ENCODE measurements at regions of chr7 and their contacts with region 1.

Region 1: DNA sequence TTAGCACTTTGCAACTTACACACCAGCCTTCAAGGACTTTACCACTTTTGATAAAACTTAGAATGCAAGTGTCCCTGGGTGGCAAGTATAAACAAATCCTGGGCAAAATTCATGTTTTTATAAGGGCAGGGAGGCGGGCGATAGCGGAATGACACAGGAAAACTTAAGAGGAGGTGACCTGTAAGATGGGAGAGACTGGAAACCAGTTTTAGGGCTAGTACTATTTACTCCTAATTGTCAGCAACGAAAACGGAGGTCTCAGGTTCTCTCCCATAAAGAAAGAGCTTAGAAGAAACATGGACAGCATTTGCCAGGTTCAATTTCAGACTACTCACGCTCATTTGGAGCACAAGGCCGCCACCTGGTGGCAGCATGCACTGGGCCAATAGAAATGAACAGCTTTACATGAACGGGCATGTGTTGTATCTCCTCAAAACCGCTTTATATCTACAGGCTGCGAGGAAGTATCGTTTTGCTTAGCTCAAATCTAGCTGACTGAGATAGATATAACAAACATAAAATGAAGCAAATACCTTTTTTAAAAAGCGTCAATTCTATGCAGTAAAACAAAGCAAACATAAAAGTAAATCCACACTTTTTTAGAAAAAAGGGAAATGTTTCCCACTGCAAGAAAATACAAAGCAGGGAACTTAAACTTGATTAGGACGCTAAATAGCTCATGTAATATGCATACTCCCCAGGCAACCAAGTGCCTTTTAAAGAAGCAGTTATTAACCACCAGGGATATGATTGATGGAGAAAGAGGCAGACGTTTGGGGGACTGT is 37.6 kb upstream of the SVOPL start:
- DNase-seq: peak; percentile 68 to 90 (median 84)
- ATAC-seq: peak; percentile 99
- H3K4me3 ChIP-seq: no peak overlapping the region
- H3K4me3 Mint-ChIP-seq: no peak overlapping the region
- H3K27ac ChIP-seq: no peak overlapping the region
- H3K27ac Mint-ChIP-seq: no peak overlapping the region
- H3K4me1 ChIP-seq: no peaks in the 10 kb centered on the region
- H3K4me1 Mint-ChIP-seq: peaks cover 3% of the 10 kb centered on the region
- H3K27me3 ChIP-seq: no peaks in the 10 kb centered on the region
- H3K27me3 Mint-ChIP-seq: no peaks in the 10 kb centered on the region
- CTCF ChIP-seq: peak; percentile 94

Region 2: GRCh38 chr7:138008547-138009349 is 730.0 kb before region 1 on chr7:
- CTCF ChIA-PET with region 1: no interaction called
- POLR2A ChIA-PET with region 1: no interaction called
- intact Hi-C with region 1: loop called (anchors 1 to 5 kb)
- DNase-seq: peak in 7 of 9 experiments; percentile 9 to 71 (median 22)
- ATAC-seq: peak; percentile 77
- H3K4me3 ChIP-seq: no peak overlapping the region
- H3K4me3 Mint-ChIP-seq: no peak overlapping the region
- H3K27ac ChIP-seq: no peak overlapping the region
- H3K27ac Mint-ChIP-seq: no peak overlapping the region
- H3K4me1 ChIP-seq: no peaks in the 10 kb centered on the region
- H3K4me1 Mint-ChIP-seq: no peaks in the 10 kb centered on the region
- H3K27me3 ChIP-seq: no peaks in the 10 kb centered on the region
- H3K27me3 Mint-ChIP-seq: peaks cover 3% of the 10 kb centered on the region
- CTCF ChIP-seq: peak; percentile 96

Region 3: GRCh38 chr7:138161600-138162081 is 577.1 kb before region 1 on chr7:
- CTCF ChIA-PET with region 1: interaction called, 77 read pairs
- POLR2A ChIA-PET with region 1: interaction called, 5 read pairs
- intact Hi-C with region 1: loop called (anchors 1 kb)
- DNase-seq: peak; percentile 42 to 93 (median 74)
- ATAC-seq: peak; percentile 99
- H3K4me3 ChIP-seq: no peak overlapping the region
- H3K4me3 Mint-ChIP-seq: no peak overlapping the region
- H3K27ac ChIP-seq: no peak overlapping the region
- H3K27ac Mint-ChIP-seq: no peak overlapping the region
- H3K4me1 ChIP-seq: peaks cover 5% of the 10 kb centered on the region
- H3K4me1 Mint-ChIP-seq: no peaks in the 10 kb centered on the region
- H3K27me3 ChIP-seq: no peaks in the 10 kb centered on the region
- H3K27me3 Mint-ChIP-seq: peaks cover 3% of the 10 kb centered on the region
- CTCF ChIP-seq: peak; percentile 69

Region 4: GRCh38 chr7:138726288-138726687 is 12.5 kb before region 1 on chr7:
- CTCF ChIA-PET with region 1: interaction called, 10 read pairs
- POLR2A ChIA-PET with region 1: no interaction called
- intact Hi-C with region 1: no loop called
- DNase-seq: no peak
- ATAC-seq: no peak
- H3K4me3 ChIP-seq: no peak overlapping the region
- H3K4me3 Mint-ChIP-seq: no peak overlapping the region
- H3K27ac ChIP-seq: no peak overlapping the region
- H3K27ac Mint-ChIP-seq: no peak overlapping the region
- H3K4me1 ChIP-seq: no peaks in the 10 kb centered on the region
- H3K4me1 Mint-ChIP-seq: no peaks in the 10 kb centered on the region
- H3K27me3 ChIP-seq: no peaks in the 10 kb centered on the region
- H3K27me3 Mint-ChIP-seq: no peaks in the 10 kb centered on the region
- CTCF ChIP-seq: no peak

Measured in CD8-positive, alpha-beta T cell (primary cell).